Common myeloid progenitor, CD34-positive (primary cell): ENCODE measurements at regions of chr17 and their contacts with region 1.

Region 1: DNA sequence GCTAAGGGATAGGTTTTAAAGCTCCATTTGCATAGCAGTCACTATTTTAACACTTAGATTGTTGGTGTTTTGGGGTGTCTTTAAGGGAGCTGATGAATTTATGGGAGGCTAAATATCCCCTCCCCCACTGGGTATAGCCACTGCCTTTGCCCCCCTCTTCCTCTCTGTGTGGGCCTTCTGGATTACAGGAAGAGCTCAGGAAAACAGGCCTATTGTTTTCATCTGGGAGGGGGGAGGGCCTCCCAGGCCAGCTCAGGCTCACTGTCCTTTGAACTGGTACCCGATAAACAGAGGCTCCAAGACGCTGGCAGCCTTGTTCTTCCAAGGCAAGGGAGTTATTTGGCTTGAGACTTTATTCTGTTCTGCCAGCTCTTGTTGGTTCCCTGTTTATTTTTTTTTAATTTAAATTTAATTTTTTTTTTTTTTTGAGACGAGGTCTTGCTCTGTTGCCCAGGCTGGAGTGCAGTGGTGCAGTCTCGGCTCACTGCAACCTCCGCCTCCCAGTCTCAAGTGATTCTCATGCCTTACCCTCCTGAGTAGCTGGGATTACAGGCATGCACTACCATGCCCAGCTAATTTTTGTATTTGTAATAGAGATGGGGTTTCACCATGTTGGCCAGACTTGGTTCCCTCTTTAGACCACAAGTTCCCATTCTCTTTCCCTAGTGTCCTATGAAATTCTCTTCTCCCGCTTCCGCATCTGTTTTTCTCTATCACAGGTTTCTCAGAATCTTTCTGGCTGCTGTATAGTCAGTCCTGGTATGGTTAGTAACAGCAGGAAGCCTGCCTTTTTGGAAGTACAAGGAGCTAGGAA is 25.1 kb downstream of the MINK1 start:
- DNase-seq: no peak
- H3K4me3 ChIP-seq: no peak overlapping the region
- H3K27ac ChIP-seq: no peak overlapping the region
- H3K4me1 ChIP-seq: peaks cover 0 to 13% (median 3%) of the 10 kb centered on the region in 4 experiments
- H3K27me3 ChIP-seq: no peaks in the 10 kb centered on the region

Region 2: GRCh38 chr17:4759776-4760236 is 98.5 kb before region 1 on chr17:
- CTCF ChIA-PET with region 1: no interaction called
- POLR2A ChIA-PET with region 1: no interaction called
- DNase-seq: no peak
- H3K4me3 ChIP-seq: no peak overlapping the region
- H3K27ac ChIP-seq: no peak overlapping the region
- H3K4me1 ChIP-seq: peaks cover 0 to 7% (median 4%) of the 10 kb centered on the region in 4 experiments
- H3K27me3 ChIP-seq: peaks cover 0 to 9% (median 0%) of the 10 kb centered on the region in 5 experiments

Region 3: GRCh38 chr17:4846635-4847390 is 11.5 kb before region 1 on chr17:
- CTCF ChIA-PET with region 1: interaction called, 13 read pairs
- POLR2A ChIA-PET with region 1: no interaction called
- DNase-seq: no peak
- H3K4me3 ChIP-seq: no peak overlapping the region
- H3K27ac ChIP-seq: no peak overlapping the region
- H3K4me1 ChIP-seq: peaks cover 0 to 11% (median 7%) of the 10 kb centered on the region in 4 experiments
- H3K27me3 ChIP-seq: peaks cover 0 to 12% (median 7%) of the 10 kb centered on the region in 5 experiments